H1 (cell line): ENCODE measurements at regions of chr5 and their contacts with region 1.

Region 1: GRCh38 chr5:134225618-134226440 is at the start of gene PPP2CA:
- DNase-seq: peak; percentile 99
- H3K4me3 ChIP-seq: peak within 1 kb of the TSS; percentile 91 to 98 (median 96)
- H3K27ac ChIP-seq: peak within 1 kb of the TSS; percentile 100
- H3K4me1 ChIP-seq: peaks cover 0 to 11% (median 3%) of the 10 kb centered on the region in 4 experiments; a peak in 4 of 7 replicates
- H3K27me3 ChIP-seq: no peaks in the 10 kb centered on the region
- CTCF ChIP-seq: no peak
- EP300 ChIP-seq: no peak
- POLR2A ChIP-seq: peak; percentile 63 to 90; a peak in 2 of 3 replicates
- RAD21 ChIP-seq: no peak
- total RNA-seq, gene PPP2CA: 205 and 211 TPM in 2 replicates

Region 2: GRCh38 chr5:134153657-134154056 is 72.2 kb before region 1 on chr5:
- CTCF ChIA-PET with region 1: no interaction called
- POLR2A ChIA-PET with region 1: no interaction called
- DNase-seq: no peak
- H3K4me3 ChIP-seq: no peak overlapping the region
- H3K27ac ChIP-seq: no peak overlapping the region
- H3K4me1 ChIP-seq: no peaks in the 10 kb centered on the region
- H3K27me3 ChIP-seq: no peaks in the 10 kb centered on the region
- CTCF ChIP-seq: no peak
- EP300 ChIP-seq: no peak
- POLR2A ChIP-seq: no peak
- RAD21 ChIP-seq: no peak

Region 3: DNA sequence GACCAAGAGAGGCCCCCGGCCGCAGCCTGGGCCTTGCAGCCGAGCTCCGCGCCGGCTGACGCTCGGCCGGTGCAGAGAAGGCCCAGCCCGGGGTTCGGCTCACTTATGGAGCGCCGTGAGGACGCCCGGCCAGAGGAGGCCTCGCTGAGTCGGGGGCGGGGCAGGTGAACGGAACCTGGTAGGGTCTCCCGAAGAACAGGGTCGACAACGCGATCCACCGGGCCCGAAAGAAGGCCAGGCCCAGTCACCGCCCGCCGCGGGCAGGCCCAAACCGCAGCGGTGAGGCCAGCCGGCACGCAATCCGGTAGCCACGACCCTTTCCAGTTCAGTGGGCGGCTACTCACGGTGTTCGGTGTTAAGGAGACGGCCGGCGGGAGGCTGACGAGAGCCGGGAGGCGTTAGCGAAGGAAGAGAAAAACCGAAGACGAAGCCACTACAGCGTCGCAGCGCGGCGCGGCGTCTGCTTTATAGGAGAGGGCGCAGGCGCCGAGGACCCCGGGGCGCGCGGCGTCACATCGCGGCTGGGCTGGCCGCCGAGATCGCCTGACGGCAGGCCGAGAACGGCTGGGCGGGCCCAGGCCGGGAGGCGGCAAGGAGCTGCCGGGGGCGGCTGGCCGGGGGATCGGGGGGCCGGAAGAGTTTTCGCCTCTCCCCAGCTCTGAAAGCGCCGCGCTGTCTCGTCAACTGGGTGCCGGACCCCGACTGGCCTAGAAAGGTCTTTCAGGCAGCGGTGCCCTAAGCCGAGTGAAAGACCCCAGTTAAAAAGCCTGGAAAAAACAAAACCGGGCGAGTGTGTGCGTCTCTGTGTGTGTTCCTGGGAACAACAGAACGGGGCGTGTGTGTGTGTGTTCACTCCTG is 49.1 kb before region 1 on chr5 and contains the start of gene SKP1:
- CTCF ChIA-PET with region 1: interaction called, 3 read pairs
- POLR2A ChIA-PET with region 1: interaction called, 58 read pairs
- DNase-seq: peak; percentile 41 to 93
- H3K4me3 ChIP-seq: peak within 1 kb of the TSS; percentile 63 to 95 (median 84)
- H3K27ac ChIP-seq: peak within 1 kb of the TSS; percentile 95
- H3K4me1 ChIP-seq: peaks cover 0 to 3% (median 0%) of the 10 kb centered on the region in 4 experiments; a peak in 4 of 7 replicates
- H3K27me3 ChIP-seq: no peaks in the 10 kb centered on the region
- CTCF ChIP-seq: no peak
- EP300 ChIP-seq: peak in 1 of 2 experiments; percentile 44; a peak in 1 of 3 replicates
- POLR2A ChIP-seq: peak; percentile 98 to 99
- RAD21 ChIP-seq: no peak
- total RNA-seq, gene SKP1: 326 and 332 TPM in 2 replicates

Region 4: DNA sequence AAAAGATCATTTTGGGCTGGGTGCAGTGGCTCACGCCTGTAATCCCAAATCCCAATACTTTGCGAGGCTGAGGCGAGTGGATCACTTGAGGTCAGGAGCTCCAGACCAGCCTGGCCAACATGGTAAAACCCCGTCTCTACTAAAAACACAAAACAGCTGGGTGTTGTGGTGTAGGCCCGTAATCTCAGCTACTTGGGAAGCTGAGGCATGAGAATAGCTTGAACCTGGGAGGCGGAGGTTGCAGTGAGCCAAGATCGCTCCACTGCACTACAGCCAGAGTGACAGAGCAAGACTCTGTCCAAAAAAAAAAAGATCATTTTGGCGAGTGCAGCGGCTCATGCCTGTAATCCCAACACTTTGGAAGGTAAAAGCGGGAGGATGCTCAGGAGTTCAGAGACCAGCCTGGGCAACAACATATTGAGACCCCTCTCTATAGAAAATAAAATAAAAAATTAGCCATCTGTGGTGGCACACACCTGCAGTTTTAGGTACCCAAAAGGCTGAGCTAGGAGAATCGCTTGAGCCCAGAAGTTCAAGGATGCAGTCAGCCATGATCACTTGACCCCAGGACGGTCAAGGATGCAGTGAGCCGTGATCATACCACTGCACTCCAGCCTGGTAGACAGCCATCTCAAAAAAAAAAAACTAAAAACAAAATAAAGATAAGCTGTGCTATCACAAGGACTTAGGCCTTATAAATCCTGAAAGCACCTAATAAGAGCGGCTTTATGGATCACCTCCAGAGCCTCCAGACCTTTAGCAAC is 16.2 kb before region 1 on chr5:
- CTCF ChIA-PET with region 1: interaction called, 5 read pairs
- POLR2A ChIA-PET with region 1: interaction called, 166 read pairs
- DNase-seq: no peak
- H3K4me3 ChIP-seq: no peak overlapping the region
- H3K27ac ChIP-seq: no peak overlapping the region
- H3K4me1 ChIP-seq: no peaks in the 10 kb centered on the region
- H3K27me3 ChIP-seq: no peaks in the 10 kb centered on the region
- CTCF ChIP-seq: no peak
- EP300 ChIP-seq: no peak
- POLR2A ChIP-seq: no peak
- RAD21 ChIP-seq: no peak

Region 5: GRCh38 chr5:134249469-134250379 is 23.9 kb after region 1 on chr5:
- CTCF ChIA-PET with region 1: interaction called, 9 read pairs
- POLR2A ChIA-PET with region 1: interaction called, 35 read pairs
- DNase-seq: no peak
- H3K4me3 ChIP-seq: no peak overlapping the region
- H3K27ac ChIP-seq: no peak overlapping the region
- H3K4me1 ChIP-seq: peaks cover 8 to 17% (median 15%) of the 10 kb centered on the region in 4 experiments; a peak in 6 of 7 replicates
- H3K27me3 ChIP-seq: no peaks in the 10 kb centered on the region; a peak in 1 of 7 replicates
- CTCF ChIP-seq: no peak
- EP300 ChIP-seq: no peak
- POLR2A ChIP-seq: no peak
- RAD21 ChIP-seq: no peak

Region 6: DNA sequence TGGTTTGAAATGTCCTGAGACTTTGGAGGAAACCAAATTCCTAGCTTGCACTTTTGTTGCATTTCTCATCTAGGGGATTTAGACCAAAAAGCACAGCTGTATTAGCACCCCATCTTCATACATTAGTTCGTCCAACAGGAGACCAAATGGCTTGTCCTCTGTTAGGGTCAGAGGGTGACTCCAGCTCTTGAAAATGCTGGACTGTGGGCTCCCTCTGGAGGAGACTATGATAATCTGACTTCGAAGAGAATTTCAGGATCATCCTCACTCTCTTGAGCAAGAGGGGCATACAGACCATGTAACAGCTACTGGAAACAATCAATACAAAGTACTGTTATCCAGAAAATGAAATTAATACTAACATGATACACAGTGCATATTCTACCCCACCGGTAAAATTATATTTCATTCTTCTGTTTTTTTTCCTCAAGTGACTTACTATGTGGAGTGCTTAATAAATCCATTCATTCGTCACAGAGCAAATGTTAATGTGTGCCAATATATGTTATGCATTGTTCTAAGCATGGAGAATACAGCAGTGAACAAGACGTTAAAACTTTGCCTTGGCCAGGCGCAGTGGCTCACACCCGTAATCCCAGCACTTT is 63.8 kb after region 1 on chr5:
- CTCF ChIA-PET with region 1: interaction called, 10 read pairs
- POLR2A ChIA-PET with region 1: interaction called, 6 read pairs
- DNase-seq: peak; percentile 46 to 59
- H3K4me3 ChIP-seq: no peak overlapping the region
- H3K27ac ChIP-seq: no peak overlapping the region
- H3K4me1 ChIP-seq: no peaks in the 10 kb centered on the region
- H3K27me3 ChIP-seq: no peaks in the 10 kb centered on the region
- CTCF ChIP-seq: peak in 2 of 3 experiments; percentile 81 to 92; a peak in 3 of 4 replicates
- EP300 ChIP-seq: no peak
- POLR2A ChIP-seq: no peak
- RAD21 ChIP-seq: peak; percentile 98 to 99

Region 7: DNA sequence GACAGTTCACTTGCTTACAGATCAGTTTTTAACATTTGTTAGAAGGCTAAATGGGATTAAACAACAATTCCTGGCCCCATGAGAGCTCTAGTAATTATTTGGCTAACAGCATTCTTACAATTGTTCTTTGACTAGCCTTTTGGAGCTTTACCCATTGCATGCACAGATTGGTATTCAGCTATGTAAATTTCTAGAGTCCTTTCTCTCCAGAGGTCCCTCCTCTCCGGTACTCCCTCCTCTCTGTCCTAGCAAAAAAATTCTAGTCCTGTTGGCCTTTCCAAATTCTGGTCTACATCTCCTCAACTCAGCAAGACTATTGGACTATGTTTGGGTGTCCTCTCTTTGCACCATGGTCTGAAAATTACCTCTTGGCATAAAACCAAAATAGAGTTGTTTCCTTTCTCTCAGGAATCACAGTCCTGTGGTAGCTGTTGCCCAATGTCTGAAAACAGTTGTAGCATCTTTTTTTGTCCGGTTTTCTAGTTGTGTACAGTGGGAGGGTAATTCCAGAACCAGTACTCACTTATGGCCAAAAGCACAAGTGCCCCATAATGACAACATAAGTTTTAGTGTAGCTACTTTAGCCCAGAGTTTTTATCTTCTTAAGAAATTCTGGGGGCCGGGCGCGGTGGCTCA is 388.7 kb after region 1 on chr5:
- CTCF ChIA-PET with region 1: no interaction called
- POLR2A ChIA-PET with region 1: no interaction called
- DNase-seq: no peak
- H3K4me3 ChIP-seq: no peak overlapping the region
- H3K27ac ChIP-seq: 0 out of 2 replicates have a peak overlapping the region, but pooled peaks have one; percentile 27
- H3K4me1 ChIP-seq: no peaks in the 10 kb centered on the region
- H3K27me3 ChIP-seq: no peaks in the 10 kb centered on the region
- CTCF ChIP-seq: no peak
- EP300 ChIP-seq: no peak
- POLR2A ChIP-seq: no peak
- RAD21 ChIP-seq: no peak